ENCODE measurements at regions of chr18 and their contacts with region 1.

Region 1: DNA sequence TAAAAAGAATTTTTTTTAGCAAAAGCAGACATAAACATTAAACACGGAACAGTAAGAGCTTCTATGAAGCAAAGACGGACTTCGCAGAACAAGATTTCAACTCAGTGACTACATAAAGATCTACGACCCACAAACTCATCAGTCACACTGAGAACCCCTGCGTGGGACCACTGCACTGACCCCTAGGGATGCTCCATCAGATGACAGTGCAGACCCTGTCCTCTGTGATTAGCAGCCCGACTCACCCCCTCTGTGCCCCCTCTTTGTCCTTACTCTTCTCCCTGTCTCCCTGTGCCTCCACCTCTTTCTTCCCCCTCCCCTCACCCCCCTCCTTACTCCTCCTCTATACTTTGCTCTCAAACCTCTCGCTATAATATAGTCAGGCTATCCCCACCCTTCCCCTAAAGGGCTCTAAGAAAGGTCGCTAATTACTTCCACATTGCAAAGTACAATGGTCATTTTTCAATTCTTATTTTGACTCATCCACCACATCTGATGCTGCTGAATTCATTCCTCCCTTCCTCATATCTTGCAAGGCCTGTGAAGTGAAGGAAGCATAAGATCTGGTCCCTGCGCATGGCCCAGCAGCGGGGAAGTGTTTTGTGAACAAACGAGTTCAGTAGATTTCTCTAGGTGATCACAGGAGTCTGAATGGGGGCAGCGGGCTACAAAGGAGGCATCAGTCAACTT is 89.3 kb downstream of the CABYR start:
- DNase-seq: peak; percentile 57 to 83
- H3K4me3 ChIP-seq: no peak overlapping the region
- H3K27ac ChIP-seq: peak overlapping the region; percentile 77
- H3K4me1 ChIP-seq: peaks cover 17% of the 10 kb centered on the region
- H3K27me3 ChIP-seq: no peaks in the 10 kb centered on the region
- CTCF ChIP-seq: no peak

Region 2: DNA sequence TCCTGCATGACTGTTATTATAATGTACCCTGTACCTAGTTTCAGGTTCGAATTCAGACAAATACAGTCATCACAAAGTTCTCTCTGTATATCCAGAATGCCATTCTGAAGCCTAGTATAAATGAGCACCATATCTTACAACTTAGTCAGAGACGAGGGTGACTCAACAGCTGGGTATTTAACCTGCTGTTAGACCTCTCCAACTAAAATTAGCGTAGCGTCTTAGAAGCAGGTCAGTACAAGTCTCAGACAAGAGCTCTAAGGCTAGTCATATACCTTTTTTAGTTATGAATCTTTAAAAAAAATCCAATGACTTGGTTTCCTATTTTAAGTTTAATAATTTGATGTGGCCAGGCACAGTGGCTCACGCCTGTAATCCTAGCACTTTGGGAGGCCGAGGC is 15.2 kb before region 1 on chr18:
- CTCF ChIA-PET with region 1: interaction called, 5 read pairs
- POLR2A ChIA-PET with region 1: interaction called, 4 read pairs
- intact Hi-C with region 1: loop called (anchors 1 kb)
- DNase-seq: peak; percentile 28 to 89
- H3K4me3 ChIP-seq: peak overlapping the region; percentile 26; the same call in 1 of the 2 replicates
- H3K27ac ChIP-seq: peak overlapping the region; percentile 81
- H3K4me1 ChIP-seq: peaks cover 53% of the 10 kb centered on the region
- H3K27me3 ChIP-seq: no peaks in the 10 kb centered on the region
- CTCF ChIP-seq: no peak

Region 3: DNA sequence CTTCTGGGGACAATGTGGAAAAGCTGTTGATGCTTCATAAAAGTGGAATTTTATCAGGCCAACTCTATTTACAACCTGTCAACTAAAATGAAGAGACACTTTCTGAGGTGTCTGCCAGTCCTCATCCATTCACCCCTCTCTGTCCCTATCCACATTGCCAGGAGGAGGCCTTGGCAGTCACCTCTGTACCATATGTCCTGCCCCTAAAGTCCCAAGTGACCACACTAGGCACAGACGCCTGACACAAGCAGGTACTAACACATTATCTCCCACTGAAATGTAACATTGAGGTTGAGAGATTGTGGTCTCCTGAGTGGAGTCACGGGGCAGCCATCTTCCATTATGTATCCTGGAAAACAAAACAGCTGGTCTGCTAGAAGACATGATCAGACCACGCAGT is 98.1 kb after region 1 on chr18:
- CTCF ChIA-PET with region 1: no interaction called
- POLR2A ChIA-PET with region 1: no interaction called
- intact Hi-C with region 1: no loop called
- DNase-seq: no peak
- H3K4me3 ChIP-seq: no peak overlapping the region
- H3K27ac ChIP-seq: no peak overlapping the region
- H3K4me1 ChIP-seq: no peaks in the 10 kb centered on the region
- H3K27me3 ChIP-seq: no peaks in the 10 kb centered on the region
- CTCF ChIP-seq: no peak

Measured in PC-9 (cell line).